Activated CD8-positive, alpha-beta T cell treated with anti-CD3 and anti-CD28 coated beads, Interleukin-2, amount 10 ng/mL, durations not matched to agents 7 days and 5 days (primary cell): ENCODE measurements at regions of chr17 and their contacts with region 1.

Region 1: GRCh38 chr17:31508288-31509094 is 117.0 kb downstream of the RAB11FIP4 start:
- DNase-seq: peak; percentile 89
- ATAC-seq: peak; percentile 90
- H3K4me3 Mint-ChIP-seq: peak overlapping the region; percentile 80
- H3K27ac Mint-ChIP-seq: peak overlapping the region; percentile 99
- H3K4me1 Mint-ChIP-seq: peaks cover 55% of the 10 kb centered on the region
- H3K27me3 Mint-ChIP-seq: no peaks in the 10 kb centered on the region

Region 2: DNA sequence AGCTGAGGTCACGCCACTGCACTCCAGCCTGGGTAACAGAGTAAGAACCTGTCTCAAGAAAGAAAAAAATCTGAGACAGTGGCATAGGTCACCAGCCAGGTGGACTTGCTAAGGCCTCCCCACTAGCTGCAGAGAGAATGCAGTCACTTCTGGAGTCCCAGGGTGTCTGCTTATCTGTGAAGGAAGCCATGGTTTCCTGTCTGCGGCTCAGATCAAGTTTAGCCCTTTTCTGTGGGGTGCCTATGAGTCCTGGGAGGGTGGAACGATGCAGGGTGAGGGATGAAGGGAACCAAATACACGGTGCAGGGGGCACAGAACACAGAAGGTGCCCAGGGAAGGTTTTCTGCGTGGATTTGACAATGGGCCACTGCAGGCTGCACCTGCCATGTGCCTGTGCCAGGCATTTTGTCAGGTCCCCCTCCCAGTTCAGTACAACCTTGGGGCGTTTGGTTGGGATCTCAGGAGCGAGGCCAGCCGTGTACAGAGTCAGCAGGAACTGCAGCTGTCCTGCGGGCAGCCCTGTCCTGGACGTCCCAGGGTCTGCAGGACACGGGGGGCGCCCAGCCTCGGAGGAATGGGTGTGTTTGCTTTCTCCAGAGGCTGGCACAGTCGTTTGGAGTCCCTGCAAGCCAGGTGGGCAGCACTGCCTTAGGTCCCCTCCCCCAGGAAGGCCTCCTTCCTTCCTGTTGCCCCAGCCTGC is 75.2 kb before region 1 on chr17:
- CTCF ChIA-PET with region 1: interaction called, 47 read pairs
- POLR2A ChIA-PET with region 1: no interaction called
- DNase-seq: peak; percentile 79
- ATAC-seq: peak; percentile 97
- H3K4me3 Mint-ChIP-seq: peak overlapping the region; percentile 50
- H3K27ac Mint-ChIP-seq: no peak overlapping the region
- H3K4me1 Mint-ChIP-seq: peaks cover 27% of the 10 kb centered on the region
- H3K27me3 Mint-ChIP-seq: peaks cover 30% of the 10 kb centered on the region

Region 3: GRCh38 chr17:31487648-31488263 is 20.7 kb before region 1 on chr17:
- CTCF ChIA-PET with region 1: interaction called, 66 read pairs
- POLR2A ChIA-PET with region 1: interaction called, 129 read pairs
- DNase-seq: peak; percentile 95
- ATAC-seq: peak; percentile 93
- H3K4me3 Mint-ChIP-seq: peak overlapping the region; percentile 76
- H3K27ac Mint-ChIP-seq: peak overlapping the region; percentile 75
- H3K4me1 Mint-ChIP-seq: peaks cover 50% of the 10 kb centered on the region
- H3K27me3 Mint-ChIP-seq: no peaks in the 10 kb centered on the region

Region 4: DNA sequence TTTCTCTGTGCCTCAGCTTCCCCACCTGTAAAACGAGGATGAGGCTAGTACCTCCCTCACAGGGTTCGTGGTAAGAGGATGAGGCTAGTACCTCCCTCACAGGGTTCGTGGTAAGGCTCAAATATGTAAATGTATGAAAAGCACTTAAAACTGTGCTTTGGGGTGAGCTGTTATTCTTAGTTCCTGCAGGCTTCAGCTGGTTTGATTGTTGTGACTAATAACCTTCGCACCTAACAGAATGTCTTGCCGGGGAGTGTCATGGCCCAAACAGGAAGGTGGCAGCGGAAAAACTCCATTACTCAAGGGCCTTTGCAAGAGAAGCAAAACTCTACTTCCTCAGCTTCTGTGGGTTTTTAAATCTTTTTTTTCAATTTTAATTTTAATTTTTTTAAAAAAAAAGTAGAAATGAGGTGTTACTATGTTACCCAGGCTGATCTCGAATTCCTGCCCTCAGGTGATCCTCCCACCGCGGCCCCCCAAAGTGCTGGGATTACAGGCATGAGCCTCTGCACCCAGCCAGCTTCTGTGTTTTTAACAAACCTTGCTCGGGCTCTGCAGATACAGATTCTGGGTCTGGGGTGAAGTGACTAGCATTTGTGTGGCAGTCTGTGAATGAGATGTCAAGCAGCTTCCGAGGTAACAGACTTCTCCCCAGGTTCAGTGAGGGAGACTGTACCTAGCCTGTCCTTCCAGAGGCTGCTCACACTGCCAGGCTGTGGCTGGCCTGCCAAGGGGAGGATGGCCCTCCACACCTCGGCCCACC is 14.1 kb before region 1 on chr17:
- CTCF ChIA-PET with region 1: interaction called, 66 read pairs
- POLR2A ChIA-PET with region 1: interaction called, 129 read pairs
- DNase-seq: peak; percentile 83
- ATAC-seq: peak; percentile 74
- H3K4me3 Mint-ChIP-seq: peak overlapping the region; percentile 68
- H3K27ac Mint-ChIP-seq: peak overlapping the region; percentile 98
- H3K4me1 Mint-ChIP-seq: peaks cover 94% of the 10 kb centered on the region
- H3K27me3 Mint-ChIP-seq: no peaks in the 10 kb centered on the region

Region 5: GRCh38 chr17:31570951-31571892 is 62.7 kb after region 1 on chr17:
- CTCF ChIA-PET with region 1: no interaction called
- POLR2A ChIA-PET with region 1: no interaction called
- DNase-seq: no peak
- ATAC-seq: no peak
- H3K4me3 Mint-ChIP-seq: no peak overlapping the region
- H3K27ac Mint-ChIP-seq: no peak overlapping the region
- H3K4me1 Mint-ChIP-seq: no peaks in the 10 kb centered on the region
- H3K27me3 Mint-ChIP-seq: no peaks in the 10 kb centered on the region

Region 6: DNA sequence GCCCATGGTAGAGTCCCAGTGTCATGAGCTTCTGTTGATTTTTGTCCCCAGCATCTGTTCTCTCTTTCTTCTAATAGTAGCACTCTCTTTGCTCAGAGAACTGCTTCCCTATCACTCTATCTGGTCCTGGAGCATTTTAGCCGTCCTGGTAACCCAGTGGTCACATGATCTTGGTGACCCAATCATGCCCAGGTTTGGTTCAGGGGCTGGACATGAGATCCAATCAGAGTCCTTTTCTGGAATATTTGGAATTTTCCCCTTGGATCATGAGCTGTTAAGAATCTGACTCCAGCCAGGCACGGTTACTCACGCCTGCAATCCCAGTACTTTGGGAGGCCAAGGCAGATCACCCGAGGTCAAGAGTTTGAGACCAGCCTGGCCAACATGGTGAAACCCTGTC is 80.0 kb after region 1 on chr17:
- CTCF ChIA-PET with region 1: no interaction called
- POLR2A ChIA-PET with region 1: no interaction called
- DNase-seq: no peak
- ATAC-seq: no peak
- H3K4me3 Mint-ChIP-seq: no peak overlapping the region
- H3K27ac Mint-ChIP-seq: no peak overlapping the region
- H3K4me1 Mint-ChIP-seq: no peaks in the 10 kb centered on the region
- H3K27me3 Mint-ChIP-seq: no peaks in the 10 kb centered on the region